Posterior vena cava (tissue), 2 donors: ENCODE measurements at regions of chr1 and their contacts with region 1.

Region 1: GRCh38 chr1:27498767-27499541 is 9.0 kb upstream of the WASF2 start:
- DNase-seq: peak; percentile 70

Region 2: GRCh38 chr1:27318596-27318995 is 180.4 kb before region 1 on chr1:
- intact Hi-C with region 1: no loop called
- DNase-seq: peak; percentile 20

Region 3: DNA sequence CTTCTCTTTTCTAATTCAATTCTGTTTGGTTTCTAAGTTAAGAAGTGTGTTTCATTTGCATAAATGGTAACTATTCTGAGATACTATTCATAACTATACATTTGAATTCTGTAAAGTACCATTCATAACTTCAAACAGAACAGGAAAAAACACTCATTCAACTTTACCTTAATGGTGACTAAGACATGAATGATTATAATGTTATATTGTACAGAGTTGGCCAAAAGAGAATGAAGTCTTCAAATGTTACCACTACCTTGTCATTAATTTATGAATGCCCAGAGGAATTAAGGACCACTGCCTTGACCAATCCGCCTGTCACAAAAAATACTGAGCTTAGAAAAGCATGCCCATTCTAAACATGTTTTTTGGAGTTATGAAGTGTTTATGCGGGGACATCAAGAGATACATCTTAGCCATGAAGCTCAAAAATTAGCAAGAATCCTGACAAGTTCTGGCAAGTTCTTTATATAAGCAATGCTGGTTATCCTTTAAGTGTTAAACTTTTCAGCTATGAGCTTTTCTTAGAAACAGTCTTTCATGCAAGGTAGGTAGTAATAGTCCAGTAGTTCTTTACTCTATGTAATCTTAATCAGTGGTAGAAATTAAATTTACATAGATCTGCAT is 16.8 kb before region 1 on chr1:
- intact Hi-C with region 1: loop called in 1 of 2 experiments (anchors 1 kb)
- DNase-seq: no peak